Vagina (tissue), 2 donors: ENCODE measurements at regions of chr1 and their contacts with region 1.

Region 1: DNA sequence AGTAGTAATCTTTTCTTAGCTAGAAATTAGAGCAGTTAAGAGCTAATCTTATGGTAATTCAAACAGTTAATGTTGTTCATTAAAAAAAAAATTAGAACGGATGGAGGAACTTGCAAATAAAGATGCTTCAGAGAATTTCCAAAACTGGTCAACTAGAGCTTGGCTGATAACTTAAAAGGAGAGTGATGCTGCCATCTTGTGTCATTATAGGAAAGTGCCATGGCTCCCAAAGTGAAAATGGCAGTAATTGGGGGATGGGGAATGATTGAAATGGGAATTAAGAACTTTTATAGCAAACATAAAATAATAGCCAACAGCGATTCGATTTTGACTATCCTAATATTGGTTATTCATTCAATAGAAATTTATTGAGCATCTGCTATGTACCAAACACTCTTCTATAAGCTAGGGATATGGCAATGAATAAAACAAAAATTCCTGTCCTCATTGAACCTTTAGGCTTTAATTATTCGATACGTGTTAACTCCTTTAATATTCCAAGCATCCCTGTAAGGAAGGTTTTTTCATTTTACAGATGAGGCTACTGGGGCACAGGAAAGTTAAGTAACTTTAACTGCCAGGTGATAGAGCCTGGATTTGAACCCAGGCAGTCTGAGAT is 5.7 kb upstream of the PLPP3 start:
- DNase-seq: no peak
- H3K4me3 ChIP-seq: no peak overlapping the region
- H3K27ac ChIP-seq: no peak overlapping the region
- H3K4me1 ChIP-seq: peaks cover 9% of the 10 kb centered on the region
- H3K27me3 ChIP-seq: no peaks in the 10 kb centered on the region
- CTCF ChIP-seq: peak; percentile 68 to 91 (median 88)
- POLR2A ChIP-seq: no peak

Region 2: GRCh38 chr1:55131801-55132200 is 1453.2 kb before region 1 on chr1:
- intact Hi-C with region 1: loop called (anchors 10 kb)
- DNase-seq: no peak
- H3K4me3 ChIP-seq: no peak overlapping the region
- H3K27ac ChIP-seq: no peak overlapping the region
- H3K4me1 ChIP-seq: no peaks in the 10 kb centered on the region
- H3K27me3 ChIP-seq: no peaks in the 10 kb centered on the region
- CTCF ChIP-seq: no peak
- POLR2A ChIP-seq: no peak

Region 3: GRCh38 chr1:55284852-55285251 is 1300.2 kb before region 1 on chr1:
- intact Hi-C with region 1: loop called (anchors 2 kb)
- DNase-seq: no peak
- H3K4me3 ChIP-seq: no peak overlapping the region
- H3K27ac ChIP-seq: peak overlapping the region; percentile 3
- H3K4me1 ChIP-seq: peaks cover 11% of the 10 kb centered on the region
- H3K27me3 ChIP-seq: no peaks in the 10 kb centered on the region
- CTCF ChIP-seq: peak; percentile 38 to 67 (median 60)
- POLR2A ChIP-seq: no peak

Region 4: GRCh38 chr1:56539520-56539931 is 45.5 kb before region 1 on chr1:
- intact Hi-C with region 1: no loop called
- DNase-seq: no peak
- H3K4me3 ChIP-seq: no peak overlapping the region
- H3K27ac ChIP-seq: no peak overlapping the region
- H3K4me1 ChIP-seq: peaks cover 91% of the 10 kb centered on the region
- H3K27me3 ChIP-seq: no peaks in the 10 kb centered on the region
- CTCF ChIP-seq: no peak
- POLR2A ChIP-seq: no peak